Lower leg skin (tissue), 4 donors: ENCODE measurements at regions of chr14 and their contacts with region 1.

Region 1: DNA sequence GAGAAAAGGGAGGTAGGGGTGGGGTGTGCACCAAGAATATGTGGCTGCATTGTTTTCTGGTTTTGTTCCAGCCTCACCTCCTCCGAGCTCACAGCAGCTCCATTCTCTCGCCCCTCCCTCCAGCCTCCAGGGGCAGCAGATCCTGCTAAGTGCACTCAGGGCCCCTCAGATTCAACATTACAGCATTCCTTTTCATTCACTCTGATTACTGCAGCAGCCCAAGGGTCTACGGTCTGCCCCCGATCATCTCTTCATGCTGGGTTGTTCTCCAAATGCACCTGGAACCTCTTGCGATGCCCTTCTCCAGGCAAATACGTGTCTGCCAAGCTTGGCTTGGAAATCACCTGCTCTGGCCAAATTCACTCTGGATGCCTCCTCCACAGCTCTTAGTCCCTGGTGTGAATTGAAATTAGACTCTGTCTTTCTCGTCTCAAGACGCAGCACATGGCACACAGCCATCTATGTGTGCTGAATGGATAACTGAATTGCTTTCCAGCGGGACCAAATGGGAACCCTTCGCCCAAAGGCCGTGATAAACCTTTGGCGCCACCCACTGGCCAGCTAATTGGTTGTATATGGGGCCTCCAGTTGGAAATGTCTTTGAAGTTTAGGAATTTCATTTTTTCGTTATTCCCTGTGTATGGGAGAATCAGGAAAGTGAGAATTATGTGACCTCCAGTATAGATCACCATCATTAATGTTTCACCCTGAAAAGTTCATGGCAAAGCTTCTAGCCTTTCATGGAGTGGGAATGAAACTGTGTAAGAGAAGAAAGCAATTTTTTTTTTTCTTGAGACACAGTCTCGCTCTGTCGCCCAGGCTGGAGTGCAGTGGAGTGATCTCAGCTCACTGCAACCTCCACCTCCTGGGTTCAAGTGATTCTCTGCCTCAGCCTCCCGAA is 9.6 kb upstream of the HSP90AA1 start:
- DNase-seq: peak; percentile 81 to 96
- H3K4me3 ChIP-seq: no peak overlapping the region
- CTCF ChIP-seq: no peak
- POLR2A ChIP-seq: no peak

Region 2: GRCh38 chr14:101964297-101965144 is 131.9 kb before region 1 on chr14 and contains the start of gene DYNC1H1:
- intact Hi-C with region 1: loop called (anchors 10 kb)
- DNase-seq: peak; percentile 87 to 98
- H3K4me3 ChIP-seq: peak within 1 kb of the TSS; percentile 99
- CTCF ChIP-seq: no peak
- POLR2A ChIP-seq: peak in 1 of 2 donors; percentile 92
- total RNA-seq, gene DYNC1H1: 546 to 624 (median 593) TPM

Region 3: GRCh38 chr14:102046343-102047278 is 49.9 kb before region 1 on chr14:
- intact Hi-C with region 1: loop called (anchors 10 kb)
- DNase-seq: peak; percentile 84 to 96
- H3K4me3 ChIP-seq: no peak overlapping the region
- CTCF ChIP-seq: no peak
- POLR2A ChIP-seq: no peak